IMR-90 (cell line): ENCODE measurements at regions of chr17 and their contacts with region 1.

Region 1: GRCh38 chr17:75904749-75905521 is at the start of gene MRPL38:
- DNase-seq: peak; percentile 92
- ATAC-seq: peak; percentile 96
- H3K4me3 ChIP-seq: peak within 1 kb of the TSS; percentile 95
- H3K27ac ChIP-seq: peak within 1 kb of the TSS; percentile 74
- H3K4me1 ChIP-seq: peaks cover 4% of the 10 kb centered on the region
- H3K27me3 ChIP-seq: no peaks in the 10 kb centered on the region
- CTCF ChIP-seq: peak; percentile 95
- POLR2A ChIP-seq: peak; percentile 77
- RAD21 ChIP-seq: peak; percentile 91
- total RNA-seq, gene MRPL38: 13.3 and 15.3 TPM in 2 replicates

Region 2: DNA sequence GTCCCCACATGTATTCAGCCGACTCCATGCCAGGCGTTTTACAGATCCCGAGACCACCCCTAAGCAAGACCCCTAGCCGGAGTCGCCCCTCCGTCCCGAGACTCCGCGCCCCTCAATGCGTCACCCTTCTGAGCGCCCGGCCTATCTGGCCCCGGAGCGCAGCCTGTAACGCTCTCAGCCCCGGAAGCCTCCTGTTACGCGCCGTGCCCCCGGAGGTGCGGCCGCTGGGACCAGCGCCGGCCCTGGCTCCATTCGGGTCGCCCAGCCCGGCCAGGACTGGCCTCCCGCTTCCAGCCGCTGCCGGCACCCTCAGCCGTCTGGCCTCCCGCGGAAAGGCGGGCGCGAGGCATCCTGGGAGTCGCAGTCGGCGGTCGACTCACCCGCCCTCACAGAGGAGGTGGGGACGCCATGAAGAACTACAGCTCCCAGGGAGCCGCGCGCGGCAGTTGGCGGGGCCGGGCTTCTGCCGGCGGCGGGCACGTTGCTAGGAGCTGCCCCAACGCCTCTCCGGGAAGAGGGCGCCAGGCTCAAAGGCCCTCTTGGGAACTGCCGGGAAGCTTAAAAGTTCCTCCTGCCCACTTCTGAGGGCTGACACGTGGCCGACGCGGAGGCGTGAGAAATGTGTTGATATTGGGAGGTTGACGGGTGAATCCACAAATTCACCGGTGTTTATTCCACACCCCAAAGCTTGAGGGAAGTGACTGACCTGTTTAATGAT is 35.9 kb after region 1 on chr17 and contains the start of gene FBF1:
- CTCF ChIA-PET with region 1: no interaction called
- POLR2A ChIA-PET with region 1: no interaction called
- dilution Hi-C with region 1: no loop called
- in situ Hi-C with region 1: no loop called
- intact Hi-C with region 1: loop called (anchors 5 kb)
- DNase-seq: peak; percentile 90
- ATAC-seq: peak; percentile 99
- H3K4me3 ChIP-seq: peak within 1 kb of the TSS; percentile 72
- H3K27ac ChIP-seq: peak within 1 kb of the TSS; percentile 57
- H3K4me1 ChIP-seq: peaks cover 3% of the 10 kb centered on the region; the same call in 1 of the 2 replicates
- H3K27me3 ChIP-seq: no peaks in the 10 kb centered on the region
- CTCF ChIP-seq: no peak
- POLR2A ChIP-seq: peak; percentile 93
- RAD21 ChIP-seq: no peak
- total RNA-seq, gene FBF1: 4.5 and 5.3 TPM in 2 replicates

Region 3: DNA sequence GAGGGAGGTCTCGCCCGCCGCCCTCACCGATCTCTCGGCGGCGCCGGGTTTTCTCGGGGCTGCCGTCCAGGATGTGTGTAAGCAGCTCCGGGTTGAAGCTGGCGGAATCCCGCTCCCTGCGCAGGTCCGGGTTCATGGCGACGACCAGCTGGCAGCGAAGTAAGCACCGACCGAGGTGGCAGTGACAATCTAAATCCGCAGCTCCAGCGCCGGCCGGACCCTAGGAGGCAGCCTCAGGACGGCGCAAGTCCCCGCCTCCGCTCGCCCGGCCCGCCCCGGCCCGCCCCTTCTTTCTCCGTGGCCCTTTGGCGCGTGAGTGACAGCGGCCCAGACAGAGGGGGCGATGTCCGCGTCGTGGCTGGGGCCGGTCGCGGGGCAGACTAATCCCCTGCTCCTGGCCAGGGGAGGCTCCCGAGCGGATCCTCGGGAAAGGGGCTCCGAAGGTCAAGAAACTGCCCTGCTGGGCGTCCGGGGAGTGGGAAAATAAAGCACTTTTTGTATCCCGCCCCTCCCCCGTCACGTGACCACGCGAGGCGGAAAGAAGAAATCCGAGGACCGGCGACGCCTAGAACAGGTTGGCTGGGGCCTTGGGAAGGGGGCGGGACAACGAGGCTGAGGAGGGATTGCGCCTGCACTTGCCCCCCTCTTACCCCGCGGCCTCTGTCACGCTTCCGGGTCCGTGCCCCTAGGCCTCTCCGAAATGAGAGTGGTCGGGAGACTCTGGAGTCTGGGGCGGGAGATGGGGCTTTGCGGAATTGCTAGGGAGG is 74.2 kb after region 1 on chr17 and contains the starts of genes ACOX1 and TEN1:
- CTCF ChIA-PET with region 1: no interaction called
- POLR2A ChIA-PET with region 1: no interaction called
- dilution Hi-C with region 1: no loop called
- in situ Hi-C with region 1: no loop called
- intact Hi-C with region 1: loop called (anchors 1 kb)
- DNase-seq: peak; percentile 95
- ATAC-seq: peak; percentile 91
- H3K4me3 ChIP-seq: peak within 1 kb of the TSS; percentile 77
- H3K27ac ChIP-seq: peak within 1 kb of the TSS; percentile 96
- H3K4me1 ChIP-seq: peaks cover 7% of the 10 kb centered on the region; the same call in 1 of the 2 replicates
- H3K27me3 ChIP-seq: no peaks in the 10 kb centered on the region
- CTCF ChIP-seq: peak; percentile 25; the same call in 1 of the 2 replicates
- POLR2A ChIP-seq: peak; percentile 95
- RAD21 ChIP-seq: no peak
- total RNA-seq, gene ACOX1: 61.9 and 94.8 TPM in 2 replicates
- total RNA-seq, gene TEN1: 14.7 and 15.6 TPM in 2 replicates

Region 4: DNA sequence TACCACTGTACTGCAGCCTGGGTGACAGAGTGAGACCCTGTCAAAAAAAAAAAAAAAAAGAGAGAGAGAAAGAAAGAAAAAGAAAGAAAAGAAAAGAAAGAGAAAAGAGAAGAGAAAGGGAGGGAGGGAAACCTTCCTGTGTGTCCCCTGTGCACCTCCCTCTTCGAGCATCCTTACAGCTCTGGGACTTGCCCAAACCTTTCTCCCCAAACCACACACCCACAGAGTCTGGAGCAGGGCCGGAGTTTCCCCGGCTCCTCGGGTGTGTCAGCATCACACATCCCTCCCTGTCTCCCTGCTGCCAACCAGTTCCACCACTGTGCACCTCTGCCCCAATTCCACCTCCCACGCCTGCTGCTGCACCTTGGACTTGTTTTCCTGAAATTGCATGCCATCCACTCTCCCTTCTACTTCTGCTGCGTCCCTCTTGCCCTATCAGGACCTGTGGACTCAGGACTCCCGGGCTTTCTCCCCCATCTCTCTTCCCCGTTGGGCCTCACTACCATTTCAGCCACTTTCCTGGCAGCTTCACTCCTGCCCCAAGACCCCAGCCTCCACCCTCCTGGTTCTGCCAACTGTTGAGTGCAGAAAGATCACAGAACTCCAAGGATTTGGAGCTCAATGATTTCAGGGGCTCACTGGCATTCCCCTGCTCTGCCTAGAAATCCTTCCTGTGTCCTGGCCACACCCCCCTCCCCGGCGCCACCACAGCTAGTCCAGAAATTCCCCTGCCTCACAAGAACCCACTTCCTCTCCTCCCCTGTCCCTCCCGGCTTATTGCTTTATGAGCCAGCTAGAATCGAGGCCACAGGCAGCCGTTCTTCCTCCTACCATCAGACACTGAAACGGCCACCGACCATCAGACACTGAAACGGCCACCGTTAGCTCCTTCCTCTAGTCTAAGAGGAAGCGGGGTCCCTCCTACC is 92.0 kb after region 1 on chr17:
- CTCF ChIA-PET with region 1: interaction called, 4 read pairs
- POLR2A ChIA-PET with region 1: interaction called, 20 read pairs
- dilution Hi-C with region 1: no loop called
- in situ Hi-C with region 1: no loop called
- intact Hi-C with region 1: no loop called
- DNase-seq: peak; percentile 58
- ATAC-seq: peak; percentile 80
- H3K4me3 ChIP-seq: no peak overlapping the region
- H3K27ac ChIP-seq: no peak overlapping the region
- H3K4me1 ChIP-seq: peaks cover 7% of the 10 kb centered on the region
- H3K27me3 ChIP-seq: no peaks in the 10 kb centered on the region
- CTCF ChIP-seq: no peak
- POLR2A ChIP-seq: no peak
- RAD21 ChIP-seq: no peak

Region 5: DNA sequence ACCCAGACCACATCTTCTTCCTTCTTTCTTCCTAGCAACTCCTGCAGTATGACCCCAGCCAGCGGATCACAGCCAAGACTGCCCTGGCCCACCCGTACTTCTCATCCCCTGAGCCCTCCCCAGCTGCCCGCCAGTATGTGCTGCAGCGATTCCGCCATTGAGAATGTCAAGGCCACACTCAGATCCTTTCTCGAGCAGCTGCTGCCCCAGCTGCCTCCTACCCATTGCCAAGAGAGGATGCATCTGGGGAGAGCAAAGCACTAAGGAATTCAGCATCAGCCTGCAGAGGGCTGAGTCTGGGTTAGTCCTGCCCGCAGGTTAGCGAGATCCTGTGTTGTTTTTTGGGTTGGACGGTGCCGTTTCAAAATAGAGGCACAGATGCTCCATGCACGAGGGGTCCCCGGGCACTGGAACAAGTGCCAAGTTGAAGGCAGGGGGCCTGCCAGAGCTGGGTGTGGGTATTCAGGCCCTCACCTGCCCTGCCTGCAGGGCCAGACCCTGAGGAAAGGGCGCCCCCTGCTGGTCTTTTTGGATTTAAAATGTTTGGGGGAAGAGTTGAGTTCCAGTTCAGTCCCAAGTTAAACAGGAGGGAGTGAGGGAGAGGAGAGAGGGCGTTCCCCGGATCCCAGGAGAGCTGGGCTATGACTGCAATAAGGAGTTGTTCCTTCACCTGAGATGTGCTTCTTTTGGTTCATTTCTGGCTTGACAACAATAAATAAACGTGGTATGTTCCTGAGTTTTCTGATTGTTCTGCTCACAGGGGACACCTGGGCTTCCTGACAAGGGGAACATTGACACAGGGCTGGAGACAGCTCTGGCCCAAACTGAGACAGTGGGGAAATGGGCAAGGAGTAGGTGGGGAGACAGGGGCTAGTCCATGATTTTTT is 100.6 kb after region 1 on chr17:
- CTCF ChIA-PET with region 1: interaction called, 7 read pairs
- POLR2A ChIA-PET with region 1: no interaction called
- dilution Hi-C with region 1: no loop called
- in situ Hi-C with region 1: loop called (anchors 5 kb)
- intact Hi-C with region 1: loop called (anchors 1 kb)
- DNase-seq: peak; percentile 63
- ATAC-seq: peak; percentile 78
- H3K4me3 ChIP-seq: no peak overlapping the region
- H3K27ac ChIP-seq: 0 out of 2 replicates have a peak overlapping the region, but pooled peaks have one; percentile 5
- H3K4me1 ChIP-seq: peaks cover 7% of the 10 kb centered on the region
- H3K27me3 ChIP-seq: no peaks in the 10 kb centered on the region
- CTCF ChIP-seq: peak; percentile 76
- POLR2A ChIP-seq: no peak
- RAD21 ChIP-seq: peak; percentile 75

Region 6: DNA sequence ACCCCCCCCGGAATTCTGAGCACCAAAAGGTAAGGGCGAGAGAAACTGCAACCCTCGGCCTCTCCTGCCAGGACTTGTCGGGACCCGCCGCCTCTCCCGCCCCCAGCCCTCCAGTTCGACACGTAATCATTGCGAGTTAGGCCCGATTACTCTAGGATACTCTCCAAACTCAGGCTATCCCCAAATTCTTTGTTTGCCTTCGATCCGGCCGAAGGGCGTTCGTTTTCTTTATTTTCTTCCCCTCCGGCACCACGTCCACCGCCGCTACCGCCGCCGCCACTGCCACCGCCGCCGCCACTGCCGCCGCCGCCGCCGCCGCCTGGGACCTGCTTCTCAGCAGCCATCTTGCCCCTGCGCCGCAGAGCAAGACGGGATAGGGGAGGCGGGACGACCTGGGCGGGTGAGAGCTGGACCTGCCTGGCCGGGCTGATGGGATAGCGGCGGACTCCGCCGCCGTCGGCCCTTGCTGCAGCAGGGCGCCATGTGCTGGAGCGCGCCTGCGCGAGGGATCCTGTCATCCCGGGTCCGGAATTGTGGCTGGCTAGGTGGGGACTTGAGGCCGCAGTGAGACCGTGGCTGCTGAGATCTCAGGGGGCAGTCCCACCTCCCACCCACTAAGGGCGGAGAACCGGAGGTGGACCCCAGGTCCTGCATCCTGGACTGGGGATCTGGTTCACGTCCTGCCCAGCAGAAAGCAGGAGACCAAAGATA is 167.4 kb after region 1 on chr17 and contains the start of gene SRP68:
- CTCF ChIA-PET with region 1: no interaction called
- POLR2A ChIA-PET with region 1: no interaction called
- dilution Hi-C with region 1: no loop called
- in situ Hi-C with region 1: no loop called
- intact Hi-C with region 1: loop called (anchors 10 kb)
- DNase-seq: peak; percentile 91
- ATAC-seq: peak; percentile 100
- H3K4me3 ChIP-seq: peak within 1 kb of the TSS; percentile 93
- H3K27ac ChIP-seq: peak within 1 kb of the TSS; percentile 76
- H3K4me1 ChIP-seq: peaks cover 3% of the 10 kb centered on the region; the same call in 1 of the 2 replicates
- H3K27me3 ChIP-seq: peaks cover 36% of the 10 kb centered on the region
- CTCF ChIP-seq: no peak
- POLR2A ChIP-seq: peak; percentile 82
- RAD21 ChIP-seq: no peak
- total RNA-seq, gene SRP68: 47.1 and 47.2 TPM in 2 replicates

Region 7: GRCh38 chr17:76278952-76279741 is 374.2 kb after region 1 on chr17:
- CTCF ChIA-PET with region 1: no interaction called
- POLR2A ChIA-PET with region 1: no interaction called
- dilution Hi-C with region 1: no loop called
- in situ Hi-C with region 1: loop called (anchors 10 kb)
- intact Hi-C with region 1: no loop called
- DNase-seq: peak; percentile 62
- ATAC-seq: peak; percentile 98
- H3K4me3 ChIP-seq: no peak overlapping the region
- H3K27ac ChIP-seq: no peak overlapping the region
- H3K4me1 ChIP-seq: peaks cover 4% of the 10 kb centered on the region
- H3K27me3 ChIP-seq: no peaks in the 10 kb centered on the region
- CTCF ChIP-seq: peak; percentile 98
- POLR2A ChIP-seq: no peak
- RAD21 ChIP-seq: peak; percentile 99